Posterior vena cava (tissue), 2 donors: ENCODE measurements at regions of chr11 and their contacts with region 1.

Region 1: DNA sequence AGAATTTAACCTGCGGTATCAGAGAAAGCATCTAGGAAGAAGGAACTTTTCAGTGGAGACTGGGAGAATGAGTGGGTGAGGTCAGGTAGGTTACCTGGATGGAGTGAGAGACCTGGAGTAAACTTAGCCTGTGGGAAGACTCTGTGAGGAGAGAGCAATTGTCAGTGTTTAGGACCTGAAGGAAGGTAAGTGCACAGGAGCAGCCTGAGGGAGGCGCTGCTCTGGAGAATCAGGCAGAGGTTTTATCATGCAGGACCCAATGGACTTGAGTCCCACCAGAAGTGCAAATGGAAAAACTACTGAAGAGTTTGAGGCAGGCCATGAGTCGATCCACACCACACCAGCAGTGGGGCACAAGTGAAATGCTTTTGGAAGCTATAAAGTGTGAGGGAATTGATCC is 10.6 kb upstream of the IFTAP start:
- DNase-seq: no peak

Region 2: GRCh38 chr11:35246745-35247144 is 1336.9 kb before region 1 on chr11:
- intact Hi-C with region 1: loop called in 1 of 2 experiments (anchors 5 kb)
- DNase-seq: no peak